PC-9 (cell line): ENCODE measurements at regions of chr4 and their contacts with region 1.

Region 1: GRCh38 chr4:139273835-139274234 is 6.2 kb downstream of the MGARP start:
- DNase-seq: no peak
- H3K4me3 ChIP-seq: no peak overlapping the region
- H3K27ac ChIP-seq: no peak overlapping the region
- H3K4me1 ChIP-seq: no peaks in the 10 kb centered on the region
- H3K27me3 ChIP-seq: no peaks in the 10 kb centered on the region
- CTCF ChIP-seq: no peak

Region 2: DNA sequence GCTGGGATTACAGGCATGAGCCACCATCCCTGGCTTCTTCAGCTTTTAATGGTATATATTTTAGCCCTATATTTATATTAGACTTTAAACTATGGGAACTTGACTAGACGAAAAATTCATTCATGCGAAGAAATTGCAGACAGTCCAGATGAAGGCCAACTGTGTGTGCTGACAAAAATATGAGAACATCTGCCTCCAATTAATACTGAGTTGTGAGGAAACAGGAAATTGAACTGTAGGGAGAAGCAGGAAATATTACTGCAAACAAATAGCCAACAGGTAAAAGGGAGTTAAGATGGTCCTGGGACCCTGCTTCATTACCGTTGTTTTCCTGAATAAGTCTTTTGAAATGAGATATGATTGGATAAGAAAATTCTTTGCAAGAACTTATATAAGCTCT is 20.1 kb before region 1 on chr4:
- CTCF ChIA-PET with region 1: interaction called, 13 read pairs
- POLR2A ChIA-PET with region 1: no interaction called
- intact Hi-C with region 1: no loop called
- DNase-seq: no peak
- H3K4me3 ChIP-seq: no peak overlapping the region
- H3K27ac ChIP-seq: no peak overlapping the region
- H3K4me1 ChIP-seq: no peaks in the 10 kb centered on the region
- H3K27me3 ChIP-seq: no peaks in the 10 kb centered on the region
- CTCF ChIP-seq: no peak